ENCODE measurements at regions of chr1 and their contacts with region 1.

Region 1: GRCh38 chr1:41662765-41663437 is 178.4 kb upstream of the EDN2 start:
- DNase-seq: no peak
- CTCF ChIP-seq: no peak

Region 2: DNA sequence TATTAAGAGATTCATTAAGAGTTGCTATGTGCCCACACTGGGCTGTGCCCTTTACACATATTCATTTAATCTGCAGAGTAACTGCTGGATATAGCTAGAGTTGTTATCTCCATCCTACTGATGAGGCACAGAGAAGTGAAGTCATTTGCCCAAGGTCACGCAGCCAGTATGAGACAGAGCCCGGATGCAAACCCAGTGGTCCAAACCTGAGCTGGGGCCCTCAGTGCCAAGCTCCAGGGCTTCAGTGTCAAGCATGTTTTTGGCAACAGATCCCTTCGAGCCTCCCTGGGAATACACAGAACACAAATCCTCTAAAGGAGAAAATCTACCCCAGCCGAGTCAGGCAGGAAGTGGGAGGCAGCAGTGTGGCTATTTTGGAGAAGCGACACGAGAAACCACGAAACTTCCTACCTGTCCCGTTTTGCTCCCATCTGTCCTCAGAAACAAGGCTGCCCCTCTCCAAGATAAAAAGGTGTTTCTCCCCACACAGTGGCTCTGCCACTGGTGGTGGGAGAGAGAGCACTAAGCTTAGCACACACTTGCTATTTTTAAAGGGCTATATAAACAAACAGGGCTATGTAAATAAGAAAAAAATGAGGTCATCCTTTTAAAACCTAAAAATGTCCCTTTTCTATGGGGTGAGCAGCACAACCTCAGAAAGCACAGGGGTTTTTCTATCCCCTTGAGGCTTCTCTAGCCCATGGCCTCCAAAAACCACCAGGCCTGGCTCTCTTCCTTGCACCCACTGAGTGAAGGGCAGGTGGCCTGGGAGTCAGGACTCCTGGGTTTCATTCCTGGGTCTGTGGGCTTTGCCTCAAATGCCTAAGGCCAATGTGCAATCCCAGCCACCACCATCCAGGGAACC is 39.8 kb before region 1 on chr1:
- CTCF ChIA-PET with region 1: interaction called, 13 read pairs
- POLR2A ChIA-PET with region 1: no interaction called
- DNase-seq: peak; percentile 84
- CTCF ChIP-seq: no peak

Region 3: DNA sequence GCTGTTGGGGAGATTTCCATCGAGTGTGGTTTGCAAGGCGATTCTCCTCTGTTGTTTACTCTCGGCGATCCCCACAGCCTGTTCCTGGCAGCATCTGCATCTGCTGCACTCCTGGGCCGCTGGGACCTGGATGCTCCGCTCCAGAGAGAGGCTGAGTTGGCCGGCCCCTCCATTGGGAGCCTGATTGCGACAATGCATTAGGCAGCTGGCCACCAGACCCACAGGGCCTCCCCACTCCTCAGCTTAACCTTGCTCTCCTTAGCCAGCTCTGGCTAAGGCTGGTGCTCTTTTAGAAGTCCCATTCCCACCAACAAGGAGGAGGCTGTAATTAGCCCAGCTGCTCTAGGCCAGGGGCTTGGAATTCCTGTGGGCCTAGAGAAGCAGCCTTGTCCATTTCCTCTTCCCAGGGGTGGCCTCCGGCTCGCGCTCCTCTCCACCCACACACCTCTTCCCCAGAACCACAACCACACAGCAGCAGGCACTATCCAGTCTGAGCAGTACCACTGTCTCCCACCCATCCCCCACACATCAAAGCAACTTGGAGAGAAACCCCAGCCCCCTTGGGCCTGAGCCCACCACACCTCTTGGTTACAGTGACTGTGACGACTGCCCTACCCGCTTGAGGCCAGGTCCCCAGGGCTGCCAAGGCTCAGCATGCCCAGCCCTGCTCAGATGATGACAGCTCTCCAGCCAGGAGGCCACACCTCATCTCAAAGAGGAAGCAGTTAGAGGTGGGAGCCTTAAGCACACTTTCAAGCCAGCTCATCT is 15.4 kb after region 1 on chr1:
- CTCF ChIA-PET with region 1: interaction called, 13 read pairs
- POLR2A ChIA-PET with region 1: no interaction called
- DNase-seq: peak; percentile 71
- CTCF ChIP-seq: no peak

Region 4: GRCh38 chr1:41842993-41843755 is 180.3 kb after region 1 on chr1:
- CTCF ChIA-PET with region 1: no interaction called
- POLR2A ChIA-PET with region 1: no interaction called
- DNase-seq: no peak
- CTCF ChIP-seq: no peak

Region 5: GRCh38 chr1:42713293-42713692 is 1050.4 kb after region 1 on chr1:
- CTCF ChIA-PET with region 1: no interaction called
- POLR2A ChIA-PET with region 1: no interaction called
- DNase-seq: no peak
- CTCF ChIP-seq: no peak

Measured in GM10248 (cell line).